ENCODE measurements at regions of chr1 and their contacts with region 1.

Region 1: GRCh38 chr1:89104147-89104546 is 21.8 kb downstream of the GBP2 start:
- DNase-seq: no peak
- CTCF ChIP-seq: no peak

Region 2: GRCh38 chr1:89363196-89363595 is 259.0 kb after region 1 on chr1:
- in situ Hi-C with region 1: loop called (anchors 10 kb)
- DNase-seq: peak; percentile 21
- CTCF ChIP-seq: no peak

Measured in GM13976 (cell line).